Activated T-helper 2 cell treated with anti-CD3 and anti-CD28 coated beads, Interferon-gamma antibody, Interleukin-2, Interleukin-4, amounts not matched to agents 10 μg/mL and 5 μg/mL and 100 μg/mL, durations not matched to agents 14 hours and 24 hours and 36 hours (primary cell): ENCODE measurements at regions of chr3 and their contacts with region 1.

Region 1: DNA sequence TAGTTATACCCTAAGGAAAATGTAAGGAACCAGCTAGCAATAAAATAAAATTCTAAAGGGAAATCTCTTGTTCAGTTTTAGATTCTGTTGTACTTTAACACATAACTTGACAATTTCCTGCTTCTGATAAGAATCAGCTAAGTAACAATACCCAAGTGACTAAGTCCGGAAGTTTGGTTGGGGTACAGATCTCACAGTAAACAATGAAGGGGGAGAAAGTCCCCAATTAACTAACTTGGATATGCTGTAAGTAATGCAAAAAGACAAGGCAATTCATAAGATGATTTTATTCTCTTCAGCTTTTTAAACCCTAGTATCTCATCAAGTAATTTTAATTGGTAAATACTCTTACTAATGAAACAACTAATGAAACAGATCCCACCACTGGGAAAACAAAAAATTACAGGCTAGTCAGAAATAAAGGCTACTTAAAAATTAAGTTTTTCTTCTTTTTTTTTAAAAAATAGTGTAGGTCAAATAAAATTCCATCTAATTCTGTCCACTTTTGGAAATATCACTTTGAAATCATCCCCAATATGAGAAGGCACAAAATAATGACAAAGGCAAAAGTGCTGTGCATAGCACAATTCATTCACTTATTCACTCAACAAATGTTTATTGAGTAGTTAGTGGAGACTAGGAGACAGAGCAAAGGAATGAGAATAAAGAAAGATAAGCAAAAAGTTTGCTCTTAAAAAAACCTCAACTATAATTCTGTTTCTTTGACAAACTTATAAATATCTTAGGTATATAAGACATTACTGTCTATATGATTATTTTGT is 37.8 kb upstream of the IL20RB start:
- DNase-seq: no peak
- H3K4me3 Mint-ChIP-seq: no peak overlapping the region
- H3K27ac Mint-ChIP-seq: peak overlapping the region; percentile 64
- H3K4me1 Mint-ChIP-seq: peaks cover 64% of the 10 kb centered on the region
- H3K27me3 Mint-ChIP-seq: no peaks in the 10 kb centered on the region

Region 2: GRCh38 chr3:136899622-136900158 is 20.3 kb before region 1 on chr3:
- intact Hi-C with region 1: loop called (anchors 2 kb)
- DNase-seq: no peak
- H3K4me3 Mint-ChIP-seq: no peak overlapping the region
- H3K27ac Mint-ChIP-seq: peak overlapping the region; percentile 47
- H3K4me1 Mint-ChIP-seq: peaks cover 40% of the 10 kb centered on the region
- H3K27me3 Mint-ChIP-seq: no peaks in the 10 kb centered on the region

Region 3: DNA sequence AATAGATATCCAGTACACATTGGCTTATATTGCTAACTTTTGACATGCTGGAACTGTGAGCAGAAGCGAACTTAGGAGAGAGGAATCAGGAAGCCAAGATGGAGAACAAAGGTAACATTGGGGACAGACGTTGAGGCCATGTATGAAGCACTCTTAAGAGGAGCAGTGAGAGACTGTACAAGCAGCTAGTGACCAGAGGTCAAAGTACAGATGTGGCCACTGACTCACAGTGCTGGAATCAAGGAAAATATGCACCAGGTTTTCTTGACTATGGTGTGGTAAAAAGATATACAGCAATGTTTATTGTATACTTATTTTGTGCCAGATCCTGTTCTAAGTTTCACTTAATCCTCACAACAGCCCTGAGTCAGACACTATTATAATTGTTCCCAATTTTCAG is 35.8 kb after region 1 on chr3:
- intact Hi-C with region 1: no loop called
- DNase-seq: no peak
- H3K4me3 Mint-ChIP-seq: no peak overlapping the region
- H3K27ac Mint-ChIP-seq: no peak overlapping the region
- H3K4me1 Mint-ChIP-seq: peaks cover 14% of the 10 kb centered on the region
- H3K27me3 Mint-ChIP-seq: no peaks in the 10 kb centered on the region